Activated T-helper 1 cell treated with anti-CD3 and anti-CD28 coated beads, Interleukin-12 subunit alpha, Interleukin-12 subunit beta, Interleukin-2, Interleukin-4 antibody, amounts not matched to agents 30 ng/mL and 10 ng/mL and 1 ng/mL, durations not matched to agents 14 hours and 24 hours and 36 hours (primary cell): ENCODE measurements at regions of chr11 and their contacts with region 1.

Region 1: DNA sequence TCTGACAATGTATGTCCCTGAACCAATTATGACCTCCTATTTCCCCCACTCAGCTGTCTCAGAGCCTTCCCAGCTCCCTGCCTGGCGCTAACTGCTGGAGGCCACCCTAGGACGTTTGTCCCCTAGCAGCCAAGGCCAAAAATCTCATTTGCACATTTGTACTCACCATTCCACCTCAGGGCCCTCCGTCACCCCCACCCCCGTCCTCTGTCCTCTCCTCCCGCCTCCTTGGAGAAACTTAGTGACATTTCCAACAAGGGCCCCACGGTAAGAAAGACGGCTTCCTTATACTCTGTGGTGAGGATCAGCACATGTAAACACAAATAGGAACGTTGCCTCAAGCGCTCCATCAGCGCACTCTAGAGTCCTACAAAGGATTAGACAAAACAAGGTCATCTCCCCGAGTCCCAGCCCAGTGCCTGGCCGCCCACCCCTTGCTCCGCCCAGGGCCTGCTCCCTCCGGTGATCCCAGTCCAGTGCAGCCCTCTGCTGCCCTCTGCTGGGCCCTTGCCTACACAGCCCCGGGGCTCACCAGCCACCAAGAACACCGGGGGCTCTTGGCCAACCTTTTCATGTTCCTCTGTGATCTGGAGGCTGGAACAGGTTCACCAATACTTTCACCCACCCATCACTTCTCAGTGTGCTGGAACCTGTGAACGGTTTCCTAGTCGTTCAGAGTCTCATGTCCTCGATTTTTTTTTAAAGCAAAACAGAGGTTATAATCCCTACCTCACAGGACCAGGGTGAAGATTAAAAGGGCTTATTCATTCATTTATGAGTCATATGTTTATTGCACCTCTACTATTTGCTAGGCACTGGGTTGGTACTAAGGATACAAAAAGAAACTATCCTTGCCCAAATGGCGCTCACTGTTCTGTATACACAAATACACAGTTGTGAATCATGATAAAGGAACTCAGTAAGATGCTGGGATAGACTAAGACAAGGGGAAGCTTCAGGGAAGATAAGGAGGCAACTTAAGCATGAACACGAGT is 15.3 kb upstream of the CTR9 start:
- DNase-seq: peak; percentile 78
- H3K4me3 Mint-ChIP-seq: peak overlapping the region; percentile 37
- H3K27ac Mint-ChIP-seq: no peak overlapping the region
- H3K4me1 Mint-ChIP-seq: peaks cover 10% of the 10 kb centered on the region
- H3K27me3 Mint-ChIP-seq: peaks cover 10% of the 10 kb centered on the region

Region 2: DNA sequence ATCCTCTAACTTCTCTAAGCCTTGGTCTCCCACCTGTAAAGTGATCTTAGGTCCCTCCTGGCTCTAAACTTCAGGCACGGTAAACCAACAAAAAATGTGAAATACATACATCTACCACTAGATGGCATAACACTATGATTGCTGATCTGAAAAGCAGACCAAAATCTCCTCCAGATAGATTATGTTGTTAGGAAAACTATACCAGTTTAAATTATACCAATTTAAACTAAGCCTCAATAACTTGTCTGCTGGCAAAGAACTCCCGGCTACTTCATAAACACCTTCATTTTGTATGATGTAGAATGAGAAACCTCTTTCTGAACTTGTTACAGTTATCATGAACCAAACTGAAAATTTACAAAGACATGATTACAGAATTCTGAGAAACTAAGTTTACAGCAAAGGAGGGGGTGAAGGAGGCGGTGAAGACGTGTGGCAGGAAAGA is 527.6 kb before region 1 on chr11:
- intact Hi-C with region 1: loop called (anchors 5 kb)
- DNase-seq: no peak
- H3K4me3 Mint-ChIP-seq: no peak overlapping the region
- H3K27ac Mint-ChIP-seq: no peak overlapping the region
- H3K4me1 Mint-ChIP-seq: no peaks in the 10 kb centered on the region
- H3K27me3 Mint-ChIP-seq: peaks cover 11% of the 10 kb centered on the region

Region 3: GRCh38 chr11:10405855-10406592 is 329.8 kb before region 1 on chr11:
- intact Hi-C with region 1: loop called (anchors 1 kb)
- DNase-seq: peak; percentile 16
- H3K4me3 Mint-ChIP-seq: no peak overlapping the region
- H3K27ac Mint-ChIP-seq: no peak overlapping the region
- H3K4me1 Mint-ChIP-seq: peaks cover 25% of the 10 kb centered on the region
- H3K27me3 Mint-ChIP-seq: peaks cover 6% of the 10 kb centered on the region

Region 4: DNA sequence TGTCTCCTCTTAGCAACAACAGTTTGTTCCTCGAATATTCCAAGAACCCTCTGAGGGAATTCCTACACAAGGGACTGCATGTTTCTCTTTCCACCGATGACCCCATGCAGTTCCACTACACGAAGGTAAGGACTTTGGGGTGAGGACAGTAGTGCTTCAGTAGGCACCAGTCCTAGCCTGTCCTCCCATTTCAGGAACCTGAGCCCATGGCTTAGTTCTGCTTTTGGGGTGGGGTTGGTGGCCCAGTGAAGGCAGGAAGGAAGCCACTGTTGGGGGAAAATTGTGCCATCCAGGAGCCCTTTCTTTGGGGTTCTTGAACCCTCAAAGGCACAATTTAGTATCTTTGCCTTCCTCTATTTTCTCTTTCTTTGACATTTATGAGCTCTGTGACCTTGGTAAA is 233.0 kb before region 1 on chr11:
- intact Hi-C with region 1: no loop called
- DNase-seq: no peak
- H3K4me3 Mint-ChIP-seq: no peak overlapping the region
- H3K27ac Mint-ChIP-seq: no peak overlapping the region
- H3K4me1 Mint-ChIP-seq: peaks cover 5% of the 10 kb centered on the region
- H3K27me3 Mint-ChIP-seq: no peaks in the 10 kb centered on the region

Region 5: DNA sequence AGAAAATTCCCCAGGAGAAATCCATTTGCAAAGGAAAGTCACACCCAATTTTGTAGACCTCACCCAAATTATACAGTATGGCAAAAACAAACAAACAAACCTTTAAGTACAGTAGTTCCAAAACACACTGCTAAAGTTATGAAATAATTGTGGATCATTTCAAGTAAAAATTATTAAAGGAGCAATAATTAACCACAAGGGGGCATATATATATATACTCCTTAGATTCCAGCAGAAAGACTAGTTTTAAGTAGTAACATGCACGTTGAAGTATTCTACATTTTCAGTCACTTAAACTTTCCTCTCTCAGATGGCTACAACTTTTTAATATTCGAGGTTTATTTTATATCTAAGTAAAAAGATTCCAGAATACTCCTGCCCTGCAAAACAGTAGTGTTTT is 221.6 kb before region 1 on chr11:
- intact Hi-C with region 1: loop called (anchors 5 kb)
- DNase-seq: no peak
- H3K4me3 Mint-ChIP-seq: no peak overlapping the region
- H3K27ac Mint-ChIP-seq: no peak overlapping the region
- H3K4me1 Mint-ChIP-seq: peaks cover 5% of the 10 kb centered on the region
- H3K27me3 Mint-ChIP-seq: no peaks in the 10 kb centered on the region

Region 6: DNA sequence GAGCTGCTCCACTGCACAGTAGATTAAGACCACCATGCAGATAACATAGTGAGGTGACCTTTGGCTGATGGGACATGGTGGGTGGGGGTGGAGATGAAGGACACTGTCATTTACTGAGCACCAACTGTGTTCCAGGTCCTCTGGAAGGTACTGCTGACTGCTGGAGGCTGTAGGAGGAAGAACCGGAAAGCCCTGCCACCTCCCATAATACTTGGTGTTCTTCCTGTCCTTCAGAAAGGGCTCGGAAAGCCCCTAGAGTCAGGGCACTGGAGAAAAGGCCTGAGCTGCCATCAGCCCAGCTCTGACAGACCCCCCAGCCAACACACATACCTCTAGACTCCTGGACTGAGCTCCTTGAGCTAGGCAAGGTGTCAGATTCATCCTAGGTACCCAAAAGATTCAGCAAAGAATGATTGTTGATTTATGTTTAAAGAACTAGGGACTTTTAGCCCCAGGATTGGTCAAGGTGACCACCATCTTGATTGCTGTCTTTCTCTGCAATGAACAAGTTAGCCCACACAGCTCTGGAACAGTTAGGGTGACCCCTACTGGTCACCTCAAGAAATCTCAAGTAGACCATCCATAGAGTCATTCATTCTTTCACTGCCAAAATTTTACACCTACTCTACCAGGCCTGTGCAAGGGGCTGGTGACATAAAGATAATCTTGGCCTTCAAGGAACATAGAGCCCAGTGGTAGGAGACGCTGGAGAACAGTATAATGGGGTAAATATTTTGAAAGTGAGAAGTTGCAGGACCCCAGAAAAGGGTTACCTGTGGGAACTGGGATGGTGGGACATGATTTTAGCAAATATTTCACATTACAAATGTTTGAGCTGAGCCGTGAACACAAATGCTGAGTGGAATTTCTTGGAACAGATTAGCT is 81.6 kb before region 1 on chr11:
- intact Hi-C with region 1: loop called (anchors 1 kb)
- DNase-seq: peak; percentile 16
- H3K4me3 Mint-ChIP-seq: no peak overlapping the region
- H3K27ac Mint-ChIP-seq: no peak overlapping the region
- H3K4me1 Mint-ChIP-seq: peaks cover 33% of the 10 kb centered on the region
- H3K27me3 Mint-ChIP-seq: peaks cover 2% of the 10 kb centered on the region